Kidney (tissue), 22 donors: ENCODE measurements at regions of chr1 and their contacts with region 1.

Region 1: GRCh38 chr1:53945433-53946251 is at the start of gene IFT25:
- DNase-seq: peak; percentile 97 to 99 (median 99)
- H3K4me3 ChIP-seq: peak within 1 kb of the TSS; percentile 74 to 91 (median 85)
- H3K27ac ChIP-seq: peak within 1 kb of the TSS; percentile 89 to 92
- H3K4me1 ChIP-seq: peaks cover 0 to 12% (median 3%) of the 10 kb centered on the region in 3 donors
- H3K27me3 ChIP-seq: no peaks in the 10 kb centered on the region
- CTCF ChIP-seq: no peak
- total RNA-seq, gene IFT25: 29.9 TPM

Region 2: GRCh38 chr1:53889304-53890298 is 56.0 kb before region 1 on chr1 and contains the start of gene YIPF1:
- intact Hi-C with region 1: loop called (anchors 10 kb)
- DNase-seq: peak; percentile 90 to 97 (median 95)
- H3K4me3 ChIP-seq: peak within 1 kb of the TSS; percentile 80 to 96 (median 89)
- H3K27ac ChIP-seq: peak within 1 kb of the TSS; percentile 64 to 78
- H3K4me1 ChIP-seq: peaks cover 3 to 11% (median 6%) of the 10 kb centered on the region in 3 donors
- H3K27me3 ChIP-seq: no peaks in the 10 kb centered on the region
- CTCF ChIP-seq: no peak
- total RNA-seq, gene YIPF1: 33.3 TPM